CD8-positive, alpha-beta memory T cell (primary cell): ENCODE measurements at regions of chr14 and their contacts with region 1.

Region 1: GRCh38 chr14:67426983-67427606 is 15.1 kb upstream of the PLEK2 start:
- DNase-seq: peak; percentile 54 to 84 (median 63)
- H3K4me3 ChIP-seq: no peak overlapping the region
- H3K4me3 Mint-ChIP-seq: no peak overlapping the region
- H3K27ac ChIP-seq: no peak overlapping the region
- H3K27ac Mint-ChIP-seq: peak overlapping the region in 2 of 8 donors; percentile 20 to 21
- H3K4me1 ChIP-seq: no peaks in the 10 kb centered on the region
- H3K4me1 Mint-ChIP-seq: no peaks in the 10 kb centered on the region
- H3K27me3 ChIP-seq: no peaks in the 10 kb centered on the region
- H3K27me3 Mint-ChIP-seq: peaks cover 10 to 29% of the 10 kb centered on the region in 2 donors

Region 2: GRCh38 chr14:67158566-67158965 is 268.5 kb before region 1 on chr14:
- CTCF ChIA-PET with region 1: no interaction called
- POLR2A ChIA-PET with region 1: no interaction called
- DNase-seq: no peak
- H3K4me3 ChIP-seq: no peak overlapping the region
- H3K4me3 Mint-ChIP-seq: no peak overlapping the region
- H3K27ac ChIP-seq: no peak overlapping the region
- H3K27ac Mint-ChIP-seq: no peak overlapping the region
- H3K4me1 ChIP-seq: no peaks in the 10 kb centered on the region
- H3K4me1 Mint-ChIP-seq: no peaks in the 10 kb centered on the region
- H3K27me3 ChIP-seq: no peaks in the 10 kb centered on the region
- H3K27me3 Mint-ChIP-seq: peaks cover 0 to 2% of the 10 kb centered on the region in 2 donors

Region 3: GRCh38 chr14:67413801-67414769 is 13.0 kb before region 1 on chr14:
- CTCF ChIA-PET with region 1: interaction called, 19 read pairs
- POLR2A ChIA-PET with region 1: no interaction called
- DNase-seq: no peak
- H3K4me3 ChIP-seq: no peak overlapping the region
- H3K4me3 Mint-ChIP-seq: no peak overlapping the region
- H3K27ac ChIP-seq: no peak overlapping the region
- H3K27ac Mint-ChIP-seq: no peak overlapping the region
- H3K4me1 ChIP-seq: peaks cover 6% of the 10 kb centered on the region
- H3K4me1 Mint-ChIP-seq: peaks cover 0 to 9% (median 2%) of the 10 kb centered on the region in 3 donors
- H3K27me3 ChIP-seq: no peaks in the 10 kb centered on the region
- H3K27me3 Mint-ChIP-seq: peaks cover 4 to 9% of the 10 kb centered on the region in 2 donors

Region 4: DNA sequence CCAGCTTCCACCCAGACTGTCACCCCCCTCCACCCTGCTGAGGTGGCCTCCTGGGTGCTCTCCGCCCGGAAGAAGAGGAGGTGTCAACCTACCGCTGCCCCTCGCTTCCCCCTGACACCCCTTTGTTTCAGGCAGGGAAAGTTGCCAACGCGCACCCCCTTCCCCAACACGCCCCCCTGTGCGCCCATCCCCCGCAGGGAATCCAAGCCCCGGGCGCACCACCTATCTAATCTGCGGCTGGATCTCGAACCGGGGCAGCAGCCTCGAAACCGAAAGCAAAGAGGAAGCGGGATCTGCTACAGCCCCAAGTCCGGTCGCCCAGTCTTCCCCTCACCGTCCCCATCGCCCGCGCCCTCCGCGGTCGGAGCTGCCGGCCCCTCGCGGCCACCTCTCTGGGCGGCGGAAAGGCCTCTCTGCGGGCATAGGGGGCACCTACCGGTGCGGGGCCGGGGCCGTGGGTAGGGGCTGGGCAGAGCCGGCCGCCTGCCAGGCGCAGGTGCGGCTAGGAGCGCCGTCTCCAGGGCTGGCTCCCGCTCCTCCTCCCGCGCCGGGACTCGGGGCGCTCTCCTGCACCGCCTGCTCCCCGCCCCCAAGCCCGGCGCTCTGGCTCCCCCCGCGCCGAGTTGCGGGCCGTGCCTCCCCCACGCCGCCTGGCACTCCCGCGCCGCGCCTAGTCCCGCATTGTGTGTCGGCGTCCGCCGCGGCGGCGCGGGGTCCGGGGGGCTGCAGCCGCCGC is 87.7 kb after region 1 on chr14:
- CTCF ChIA-PET with region 1: interaction called, 16 read pairs
- POLR2A ChIA-PET with region 1: no interaction called
- DNase-seq: peak; percentile 34 to 75 (median 54)
- H3K4me3 ChIP-seq: peak overlapping the region; percentile 74
- H3K4me3 Mint-ChIP-seq: peak overlapping the region; percentile 93 to 98 (median 95)
- H3K27ac ChIP-seq: peak overlapping the region; percentile 73
- H3K27ac Mint-ChIP-seq: peak overlapping the region; percentile 90 to 98 (median 92)
- H3K4me1 ChIP-seq: peaks cover 26% of the 10 kb centered on the region
- H3K4me1 Mint-ChIP-seq: peaks cover 24 to 42% (median 38%) of the 10 kb centered on the region in 3 donors
- H3K27me3 ChIP-seq: no peaks in the 10 kb centered on the region
- H3K27me3 Mint-ChIP-seq: peaks cover 0 to 1% of the 10 kb centered on the region in 2 donors

Region 5: DNA sequence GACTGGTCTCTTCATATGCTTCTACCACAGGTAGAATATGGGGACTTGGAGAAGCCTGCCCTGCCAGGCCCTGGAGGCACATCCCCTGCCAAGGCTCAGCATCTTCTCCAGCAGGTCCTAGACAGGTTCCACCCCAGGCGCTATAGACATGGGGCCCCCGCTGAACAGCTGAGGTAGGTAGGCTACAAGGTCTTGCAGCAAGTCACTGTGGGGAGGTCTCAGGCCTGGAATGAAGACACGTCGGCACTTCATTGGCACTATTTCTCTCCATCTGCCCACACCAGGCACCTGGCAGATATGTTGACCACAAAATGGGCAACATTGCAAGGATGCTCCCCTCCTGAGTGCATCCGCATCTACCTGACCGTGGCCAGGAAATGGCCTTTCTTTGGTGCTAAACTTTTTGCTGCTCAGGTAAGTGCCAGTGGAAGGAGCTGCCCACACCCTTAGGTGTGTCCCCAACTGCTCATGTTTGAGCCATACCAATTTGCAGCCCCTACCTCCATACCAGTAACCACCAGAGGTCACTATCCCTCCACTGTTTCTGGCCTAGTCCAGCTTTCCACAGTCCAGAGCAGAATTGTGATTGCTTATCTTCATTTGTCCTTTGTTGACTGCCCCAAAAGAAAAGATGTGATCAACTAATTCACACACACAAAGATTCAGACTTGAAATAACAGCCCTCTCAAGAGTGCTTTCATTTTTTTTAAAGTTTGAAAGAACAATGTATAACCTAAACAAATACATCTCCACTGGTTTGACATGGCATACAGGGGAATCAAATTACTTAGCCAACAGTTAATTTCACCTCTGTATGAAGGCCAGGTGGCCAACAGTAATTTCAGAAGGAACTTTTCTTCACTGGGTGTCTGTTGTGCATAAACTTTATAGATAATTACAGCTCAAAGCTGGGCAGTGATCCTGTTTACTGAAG is 156.9 kb after region 1 on chr14:
- CTCF ChIA-PET with region 1: interaction called, 12 read pairs
- POLR2A ChIA-PET with region 1: no interaction called
- DNase-seq: peak in 3 of 5 donors; percentile 8 to 51 (median 21)
- H3K4me3 ChIP-seq: no peak overlapping the region
- H3K4me3 Mint-ChIP-seq: no peak overlapping the region
- H3K27ac ChIP-seq: no peak overlapping the region
- H3K27ac Mint-ChIP-seq: no peak overlapping the region
- H3K4me1 ChIP-seq: no peaks in the 10 kb centered on the region
- H3K4me1 Mint-ChIP-seq: no peaks in the 10 kb centered on the region
- H3K27me3 ChIP-seq: no peaks in the 10 kb centered on the region
- H3K27me3 Mint-ChIP-seq: no peaks in the 10 kb centered on the region

Region 6: DNA sequence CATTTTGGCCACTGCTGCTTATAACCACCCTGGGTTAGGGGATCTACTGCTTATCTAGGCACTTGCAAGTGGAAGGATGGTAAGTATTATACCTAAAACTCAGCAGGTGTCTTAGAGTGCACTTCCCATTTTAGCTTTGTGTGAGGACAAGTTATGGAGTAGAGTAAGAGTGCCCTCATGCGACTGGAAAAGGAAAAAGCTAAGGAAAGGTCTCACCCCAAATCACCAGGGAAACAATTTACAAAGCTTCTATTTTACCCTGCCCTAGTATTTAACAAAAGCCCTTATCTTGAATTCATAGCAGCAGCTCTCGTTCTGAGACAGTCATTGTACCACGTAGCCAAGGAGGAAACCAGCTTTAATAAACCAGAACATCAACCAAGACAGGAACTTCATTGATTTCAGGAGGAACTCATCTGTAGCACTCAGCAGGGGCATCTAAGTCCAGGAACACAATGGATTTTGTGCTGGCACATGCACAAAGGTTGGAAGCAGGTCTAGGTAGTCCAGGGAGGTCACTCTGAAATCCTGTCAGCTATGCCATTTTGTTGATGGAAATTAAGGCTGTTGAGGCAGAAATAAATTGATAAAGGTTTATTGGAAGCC is 277.5 kb after region 1 on chr14:
- CTCF ChIA-PET with region 1: interaction called, 33 read pairs
- POLR2A ChIA-PET with region 1: no interaction called
- DNase-seq: peak in 2 of 5 donors; percentile 45 to 51
- H3K4me3 ChIP-seq: no peak overlapping the region
- H3K4me3 Mint-ChIP-seq: no peak overlapping the region
- H3K27ac ChIP-seq: no peak overlapping the region
- H3K27ac Mint-ChIP-seq: peak overlapping the region in 1 of 8 donors; percentile 16
- H3K4me1 ChIP-seq: no peaks in the 10 kb centered on the region
- H3K4me1 Mint-ChIP-seq: no peaks in the 10 kb centered on the region
- H3K27me3 ChIP-seq: no peaks in the 10 kb centered on the region
- H3K27me3 Mint-ChIP-seq: peaks cover 0 to 5% of the 10 kb centered on the region in 2 donors